ENCODE measurements at regions of chr11 and their contacts with region 1.

Region 1: DNA sequence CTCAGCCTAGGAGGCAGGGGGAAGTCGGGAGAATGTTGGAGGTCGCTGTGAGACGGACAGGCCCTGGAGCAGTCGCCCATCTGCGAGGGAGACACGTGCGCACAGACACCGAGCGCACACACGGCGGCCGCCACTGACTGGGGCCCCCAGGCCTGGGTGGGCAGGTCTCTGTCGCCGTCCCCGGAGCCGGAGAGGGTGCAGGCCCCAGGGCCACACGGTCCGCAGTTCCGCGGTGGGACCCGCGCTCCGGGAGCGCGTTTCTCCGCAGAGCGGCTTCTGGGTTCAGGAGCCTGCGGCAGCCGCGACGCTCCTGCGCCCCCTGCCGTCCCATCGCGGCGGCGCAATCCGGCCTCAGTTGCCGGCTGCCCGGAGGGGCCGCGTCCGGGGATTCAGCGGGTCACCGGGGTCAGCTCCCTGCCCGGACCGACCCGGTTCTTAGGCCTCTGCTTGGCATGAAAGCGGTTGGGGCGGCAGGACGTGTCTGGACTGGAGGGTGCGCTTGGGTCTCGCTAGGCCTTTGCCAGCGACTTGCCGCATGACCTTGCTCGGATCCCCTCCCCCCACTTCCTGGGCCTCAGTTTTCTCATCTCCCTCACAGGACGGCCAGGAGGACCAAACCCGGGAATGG is 31.2 kb downstream of the PDE2A start:
- DNase-seq: peak; percentile 51
- H3K4me3 ChIP-seq: peak overlapping the region; percentile 32 to 45
- H3K27ac ChIP-seq: no peak overlapping the region
- H3K4me1 ChIP-seq: peaks cover 13% of the 10 kb centered on the region
- H3K27me3 ChIP-seq: no peaks in the 10 kb centered on the region
- CTCF ChIP-seq: peak; percentile 90 to 92 (median 92)
- POLR2A ChIP-seq: no peak

Region 2: GRCh38 chr11:72585762-72586311 is 57.2 kb before region 1 on chr11:
- intact Hi-C with region 1: loop called (anchors 5 kb)
- DNase-seq: peak; percentile 87
- H3K4me3 ChIP-seq: no peak overlapping the region
- H3K27ac ChIP-seq: no peak overlapping the region
- H3K4me1 ChIP-seq: peaks cover 22% of the 10 kb centered on the region
- H3K27me3 ChIP-seq: no peaks in the 10 kb centered on the region
- CTCF ChIP-seq: peak; percentile 86 to 92 (median 91)
- POLR2A ChIP-seq: no peak